ENCODE measurements at regions of chr12 and their contacts with region 1.

Region 1: GRCh38 chr12:27142101-27142721 is 59.8 kb upstream of the C12orf71 start:
- DNase-seq: peak in 4 of 5 donors; percentile 47 to 74 (median 64)
- ATAC-seq: peak; percentile 78 to 96 (median 94)
- H3K4me3 ChIP-seq: no peak overlapping the region
- H3K27ac ChIP-seq: peak overlapping the region in 2 of 12 donors; percentile 6 to 15
- H3K4me1 ChIP-seq: peaks cover 0 to 17% (median 3%) of the 10 kb centered on the region in 12 donors
- H3K27me3 ChIP-seq: no peaks in the 10 kb centered on the region
- CTCF ChIP-seq: peak; percentile 65 to 93 (median 80)
- POLR2A ChIP-seq: no peak

Region 2: GRCh38 chr12:27024291-27024690 is 117.9 kb before region 1 on chr12:
- intact Hi-C with region 1: loop called in 3 of 10 experiments (anchors 10 kb)
- DNase-seq: no peak
- ATAC-seq: no peak
- H3K4me3 ChIP-seq: peak overlapping the region in 2 of 12 donors; percentile 80 to 90
- H3K27ac ChIP-seq: no peak overlapping the region
- H3K4me1 ChIP-seq: peaks cover 0 to 32% (median 20%) of the 10 kb centered on the region in 12 donors
- H3K27me3 ChIP-seq: no peaks in the 10 kb centered on the region
- CTCF ChIP-seq: no peak
- POLR2A ChIP-seq: no peak

Region 3: GRCh38 chr12:27193854-27194544 is 51.8 kb after region 1 on chr12:
- intact Hi-C with region 1: loop called in 1 of 10 experiments (anchors 10 kb)
- DNase-seq: peak; percentile 57 to 80 (median 71)
- ATAC-seq: peak; percentile 85 to 93 (median 92)
- H3K4me3 ChIP-seq: no peak overlapping the region
- H3K27ac ChIP-seq: peak overlapping the region; percentile 19 to 92 (median 78)
- H3K4me1 ChIP-seq: peaks cover 0 to 57% (median 26%) of the 10 kb centered on the region in 12 donors
- H3K27me3 ChIP-seq: no peaks in the 10 kb centered on the region
- CTCF ChIP-seq: peak in 3 of 12 donors; percentile 13 to 22 (median 19)
- POLR2A ChIP-seq: peak in 1 of 2 donors; percentile 68

Region 4: GRCh38 chr12:27293463-27293862 is 151.3 kb after region 1 on chr12:
- intact Hi-C with region 1: loop called in 1 of 10 experiments (anchors 5 kb)
- DNase-seq: peak in 2 of 5 donors; percentile 53
- ATAC-seq: peak in 1 of 4 donors; percentile 73
- H3K4me3 ChIP-seq: no peak overlapping the region
- H3K27ac ChIP-seq: peak overlapping the region in 9 of 12 donors; percentile 55 to 76 (median 70)
- H3K4me1 ChIP-seq: peaks cover 2 to 97% (median 63%) of the 10 kb centered on the region in 12 donors
- H3K27me3 ChIP-seq: no peaks in the 10 kb centered on the region
- CTCF ChIP-seq: no peak
- POLR2A ChIP-seq: no peak

Region 5: GRCh38 chr12:27305673-27306456 is 163.7 kb after region 1 on chr12:
- intact Hi-C with region 1: loop called in 7 of 10 experiments (anchors 2 to 10 kb)
- DNase-seq: no peak
- ATAC-seq: peak in 2 of 4 donors; percentile 29 to 43
- H3K4me3 ChIP-seq: no peak overlapping the region
- H3K27ac ChIP-seq: peak overlapping the region in 6 of 12 donors; percentile 5 to 60 (median 42)
- H3K4me1 ChIP-seq: peaks cover 0 to 24% (median 5%) of the 10 kb centered on the region in 12 donors
- H3K27me3 ChIP-seq: no peaks in the 10 kb centered on the region
- CTCF ChIP-seq: peak; percentile 50 to 80 (median 67)
- POLR2A ChIP-seq: no peak

Measured in heart left ventricle (tissue), 16 donors.